WTC11 (cell line): ENCODE measurements at regions of chr5 and their contacts with region 1.

Region 1: GRCh38 chr5:23208959-23209431 is 298.4 kb upstream of the PRDM9 start:
- DNase-seq: peak; percentile 14
- ATAC-seq: peak; percentile 95
- H3K4me3 Mint-ChIP-seq: no peak overlapping the region
- H3K27ac Mint-ChIP-seq: no peak overlapping the region
- H3K4me1 Mint-ChIP-seq: peaks cover 16% of the 10 kb centered on the region
- H3K27me3 Mint-ChIP-seq: no peaks in the 10 kb centered on the region
- CTCF ChIP-seq: peak; percentile 69

Region 2: GRCh38 chr5:23084815-23085214 is 124.2 kb before region 1 on chr5:
- CTCF ChIA-PET with region 1: no interaction called
- POLR2A ChIA-PET with region 1: no interaction called
- DNase-seq: no peak
- ATAC-seq: no peak
- H3K4me3 Mint-ChIP-seq: no peak overlapping the region
- H3K27ac Mint-ChIP-seq: no peak overlapping the region
- H3K4me1 Mint-ChIP-seq: no peaks in the 10 kb centered on the region
- H3K27me3 Mint-ChIP-seq: no peaks in the 10 kb centered on the region
- CTCF ChIP-seq: no peak

Region 3: GRCh38 chr5:23302438-23302837 is 93.4 kb after region 1 on chr5:
- CTCF ChIA-PET with region 1: interaction called, 11 read pairs
- POLR2A ChIA-PET with region 1: no interaction called
- DNase-seq: no peak
- ATAC-seq: peak; percentile 85
- H3K4me3 Mint-ChIP-seq: no peak overlapping the region
- H3K27ac Mint-ChIP-seq: no peak overlapping the region
- H3K4me1 Mint-ChIP-seq: no peaks in the 10 kb centered on the region; the same call in 1 of the 2 replicates
- H3K27me3 Mint-ChIP-seq: no peaks in the 10 kb centered on the region
- CTCF ChIP-seq: no peak

Region 4: DNA sequence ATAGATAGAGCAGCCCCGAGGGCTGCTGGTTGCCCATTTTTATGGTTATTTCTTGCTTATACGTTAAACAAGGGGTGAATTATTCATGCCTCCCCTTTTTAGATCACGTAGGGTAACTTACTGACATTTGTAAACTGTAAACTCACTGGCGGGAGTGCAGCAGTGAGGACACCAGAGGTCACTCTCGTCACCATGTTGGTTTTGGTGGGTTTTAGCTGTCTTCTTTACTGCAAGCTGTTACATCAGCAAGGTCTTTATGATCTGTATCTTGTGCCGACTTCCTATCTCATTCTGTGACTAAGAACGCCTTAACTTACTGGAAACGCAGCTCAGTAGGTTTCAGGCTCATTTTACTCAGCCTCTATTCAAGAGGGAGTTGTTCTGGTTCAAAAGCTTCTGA is 143.4 kb after region 1 on chr5:
- CTCF ChIA-PET with region 1: interaction called, 10 read pairs
- POLR2A ChIA-PET with region 1: no interaction called
- DNase-seq: peak; percentile 45
- ATAC-seq: peak; percentile 93
- H3K4me3 Mint-ChIP-seq: no peak overlapping the region
- H3K27ac Mint-ChIP-seq: no peak overlapping the region
- H3K4me1 Mint-ChIP-seq: 0 out of 2 replicates have a peak, but pooled peaks cover 3% of the 10 kb centered on the region
- H3K27me3 Mint-ChIP-seq: peaks cover 3% of the 10 kb centered on the region; the same call in 1 of the 2 replicates
- CTCF ChIP-seq: 0 out of 2 replicates have a peak, but pooled peaks have one; percentile 20